Cardiac septum (tissue), 1 donor: ENCODE measurements at regions of chr18 and their contacts with region 1.

Region 1: DNA sequence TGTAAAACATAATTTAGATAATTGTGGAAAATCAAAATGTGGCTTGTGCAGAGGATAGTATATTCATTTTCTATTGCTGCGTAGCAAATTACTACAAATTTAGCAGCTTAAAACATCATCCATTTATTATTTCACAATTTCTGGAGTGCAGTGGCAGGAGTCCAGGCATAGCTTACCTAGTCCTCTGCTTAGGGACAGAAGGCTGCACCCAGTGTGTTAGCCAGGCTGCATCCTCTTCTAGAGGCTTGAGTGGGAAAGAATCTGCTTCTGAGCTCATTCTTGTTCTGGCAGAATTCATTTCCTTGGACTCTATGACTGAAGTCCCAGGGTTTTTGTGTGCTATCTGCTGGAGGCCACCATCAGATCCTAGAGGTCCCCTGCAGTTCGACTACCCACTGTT is 39.7 kb downstream of the MRO start:
- DNase-seq: no peak

Region 2: GRCh38 chr18:50662177-50662576 is 118.0 kb before region 1 on chr18:
- intact Hi-C with region 1: loop called (anchors 5 kb)
- DNase-seq: no peak

Region 3: DNA sequence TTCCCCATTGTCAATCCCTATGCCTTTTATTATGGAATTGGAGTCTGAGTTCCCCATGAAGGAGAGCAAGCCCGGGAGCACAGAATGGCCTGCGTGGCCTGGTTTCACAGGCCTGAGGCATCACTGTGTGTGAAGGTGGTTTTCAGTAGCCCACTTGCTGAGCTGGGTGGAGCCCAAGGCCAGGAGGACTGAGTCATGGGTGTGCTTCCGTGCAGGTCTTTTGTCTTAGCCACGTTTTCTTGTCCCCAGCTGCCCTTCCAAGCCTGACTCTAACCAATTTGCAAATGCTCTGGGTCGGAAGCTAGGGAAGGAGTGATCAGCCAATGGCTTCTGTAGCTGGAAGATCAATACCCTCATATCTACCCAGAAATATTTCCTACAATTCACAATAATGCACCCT is 101.1 kb before region 1 on chr18:
- intact Hi-C with region 1: loop called (anchors 5 kb)
- DNase-seq: peak; percentile 46